ENCODE measurements at regions of chr18 and their contacts with region 1.

Region 1: DNA sequence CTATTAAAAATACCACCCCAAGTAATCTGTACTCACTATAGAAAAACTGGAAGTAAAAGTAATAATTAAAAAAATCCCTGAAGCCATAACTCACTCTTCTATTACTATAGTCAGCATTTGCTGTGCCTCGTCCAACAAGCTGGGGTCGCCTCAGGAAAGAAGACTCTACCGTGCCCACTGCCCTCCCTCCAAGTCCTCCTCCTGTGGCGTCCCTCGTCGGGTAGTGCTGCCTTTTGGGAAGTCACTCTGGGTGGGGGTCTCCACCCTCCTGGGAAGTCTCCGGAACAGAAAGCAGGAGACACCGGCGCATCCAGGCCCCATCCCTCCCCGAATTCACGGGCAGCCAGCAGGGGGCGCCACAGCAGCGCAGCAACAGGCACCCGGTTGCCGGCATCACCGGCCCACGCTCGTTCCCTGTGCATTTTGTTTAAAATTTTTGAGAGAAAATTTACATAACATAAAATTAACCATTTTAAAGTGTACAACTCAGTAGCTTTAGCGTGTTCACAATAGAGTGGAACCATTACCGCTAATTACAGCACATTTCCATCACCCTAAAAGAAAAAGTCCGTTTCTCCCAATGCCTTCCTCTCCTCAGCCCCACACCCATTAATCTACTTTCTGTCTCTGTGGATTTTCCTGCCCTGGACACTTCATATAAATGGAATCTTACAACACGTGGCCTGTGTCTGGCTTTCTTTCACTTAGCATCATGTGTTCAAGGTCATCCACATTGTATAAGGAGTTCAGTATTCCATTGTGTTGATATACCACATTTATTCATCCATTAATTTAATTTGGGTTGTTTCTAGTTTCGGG is 62.2 kb downstream of the ADNP2 start:
- DNase-seq: peak; percentile 80
- CTCF ChIP-seq: peak; percentile 80

Region 2: GRCh38 chr18:80023173-80023572 is 148.1 kb before region 1 on chr18:
- CTCF ChIA-PET with region 1: no interaction called
- POLR2A ChIA-PET with region 1: no interaction called
- DNase-seq: no peak
- CTCF ChIP-seq: peak; percentile 9

Region 3: DNA sequence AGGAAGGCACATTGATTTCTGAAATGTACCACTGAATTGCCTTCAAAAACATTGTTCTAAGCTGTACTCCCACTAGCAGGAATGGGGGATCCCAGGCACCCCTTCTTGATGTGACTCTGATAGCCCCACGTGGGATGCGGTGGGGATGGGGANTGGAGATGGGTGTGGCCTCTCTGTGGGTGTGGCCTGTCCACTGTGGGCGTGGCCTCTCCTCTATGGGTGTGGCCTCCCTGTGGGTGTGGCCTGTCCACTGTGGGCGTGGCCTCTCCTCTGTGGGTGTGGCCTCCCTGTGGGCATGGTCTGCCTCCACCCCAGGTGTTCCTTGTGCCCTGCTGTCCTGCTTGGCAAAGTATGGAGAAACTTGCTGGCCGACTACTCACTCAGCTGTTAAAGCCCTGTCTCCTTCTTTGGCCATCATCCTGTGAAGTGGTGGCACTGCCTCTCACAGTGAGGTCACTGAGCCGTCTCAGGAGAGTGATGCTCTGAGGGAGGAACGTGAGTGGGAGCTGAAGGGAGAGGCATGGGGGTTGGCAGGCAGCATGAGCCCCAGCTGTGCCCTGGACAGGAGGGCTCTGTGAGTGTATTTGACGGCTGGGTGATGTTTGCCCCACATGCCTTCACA is 82.7 kb after region 1 on chr18:
- CTCF ChIA-PET with region 1: interaction called, 35 read pairs
- POLR2A ChIA-PET with region 1: no interaction called
- DNase-seq: no peak
- CTCF ChIP-seq: no peak